Dendritic cell treated with granulocyte-macrophage colony-stimulating factor and Interleukin-4, amounts not matched to agents 40 ng/mL and 50 ng/mL, for 4 days (primary cell): ENCODE measurements at regions of chr2 and their contacts with region 1.

Region 1: GRCh38 chr2:219177552-219178376 is at the start of gene RETREG2:
- H3K4me3 Mint-ChIP-seq: peak within 1 kb of the TSS; percentile 88
- H3K27ac Mint-ChIP-seq: peak within 1 kb of the TSS; percentile 99
- H3K4me1 Mint-ChIP-seq: peaks cover 84% of the 10 kb centered on the region
- H3K27me3 Mint-ChIP-seq: no peaks in the 10 kb centered on the region

Region 2: GRCh38 chr2:219206442-219207253 is 28.9 kb after region 1 on chr2 and contains the start of gene ZFAND2B:
- intact Hi-C with region 1: loop called (anchors 1 kb)
- H3K4me3 Mint-ChIP-seq: peak within 1 kb of the TSS; percentile 71
- H3K27ac Mint-ChIP-seq: peak within 1 kb of the TSS; percentile 83
- H3K4me1 Mint-ChIP-seq: peaks cover 33% of the 10 kb centered on the region
- H3K27me3 Mint-ChIP-seq: peaks cover 4% of the 10 kb centered on the region

Region 3: GRCh38 chr2:219278655-219279516 is 101.1 kb after region 1 on chr2 and contains the start of gene DNAJB2:
- intact Hi-C with region 1: loop called (anchors 1 kb)
- H3K4me3 Mint-ChIP-seq: peak within 1 kb of the TSS; percentile 86
- H3K27ac Mint-ChIP-seq: peak within 1 kb of the TSS; percentile 89
- H3K4me1 Mint-ChIP-seq: peaks cover 50% of the 10 kb centered on the region
- H3K27me3 Mint-ChIP-seq: peaks cover 5% of the 10 kb centered on the region

Region 4: GRCh38 chr2:219335373-219335786 is 157.6 kb after region 1 on chr2:
- intact Hi-C with region 1: no loop called
- H3K4me3 Mint-ChIP-seq: no peak overlapping the region
- H3K27ac Mint-ChIP-seq: no peak overlapping the region
- H3K4me1 Mint-ChIP-seq: peaks cover 19% of the 10 kb centered on the region
- H3K27me3 Mint-ChIP-seq: peaks cover 73% of the 10 kb centered on the region